ENCODE measurements at regions of chr2 and their contacts with region 1.

Region 1: GRCh38 chr2:217886720-217887309 is 116.0 kb downstream of the TNS1 start:
- DNase-seq: peak; percentile 76 to 81
- ATAC-seq: peak; percentile 80 to 89
- H3K4me3 ChIP-seq: no peak overlapping the region
- H3K27ac ChIP-seq: no peak overlapping the region
- H3K4me1 ChIP-seq: peaks cover 7% of the 10 kb centered on the region; the same call in 2 of the 3 replicates
- CTCF ChIP-seq: peak; percentile 77
- EP300 ChIP-seq: no peak
- POLR2A ChIP-seq: no peak
- RAD21 ChIP-seq: peak; percentile 71 to 81

Region 2: GRCh38 chr2:217835931-217836891 is 50.6 kb before region 1 on chr2:
- CTCF ChIA-PET with region 1: interaction called, 11 read pairs
- POLR2A ChIA-PET with region 1: no interaction called
- DNase-seq: peak in 1 of 2 experiments; percentile 25
- ATAC-seq: peak in 1 of 2 experiments; percentile 11; a peak in 2 of 6 replicates
- H3K4me3 ChIP-seq: no peak overlapping the region
- H3K27ac ChIP-seq: 0 out of 6 replicates have a peak overlapping the region, but pooled peaks of 1 of the 2 experiments have one; percentile 8
- H3K4me1 ChIP-seq: no peaks in the 10 kb centered on the region
- CTCF ChIP-seq: no peak
- EP300 ChIP-seq: no peak
- POLR2A ChIP-seq: no peak
- RAD21 ChIP-seq: no peak

Region 3: DNA sequence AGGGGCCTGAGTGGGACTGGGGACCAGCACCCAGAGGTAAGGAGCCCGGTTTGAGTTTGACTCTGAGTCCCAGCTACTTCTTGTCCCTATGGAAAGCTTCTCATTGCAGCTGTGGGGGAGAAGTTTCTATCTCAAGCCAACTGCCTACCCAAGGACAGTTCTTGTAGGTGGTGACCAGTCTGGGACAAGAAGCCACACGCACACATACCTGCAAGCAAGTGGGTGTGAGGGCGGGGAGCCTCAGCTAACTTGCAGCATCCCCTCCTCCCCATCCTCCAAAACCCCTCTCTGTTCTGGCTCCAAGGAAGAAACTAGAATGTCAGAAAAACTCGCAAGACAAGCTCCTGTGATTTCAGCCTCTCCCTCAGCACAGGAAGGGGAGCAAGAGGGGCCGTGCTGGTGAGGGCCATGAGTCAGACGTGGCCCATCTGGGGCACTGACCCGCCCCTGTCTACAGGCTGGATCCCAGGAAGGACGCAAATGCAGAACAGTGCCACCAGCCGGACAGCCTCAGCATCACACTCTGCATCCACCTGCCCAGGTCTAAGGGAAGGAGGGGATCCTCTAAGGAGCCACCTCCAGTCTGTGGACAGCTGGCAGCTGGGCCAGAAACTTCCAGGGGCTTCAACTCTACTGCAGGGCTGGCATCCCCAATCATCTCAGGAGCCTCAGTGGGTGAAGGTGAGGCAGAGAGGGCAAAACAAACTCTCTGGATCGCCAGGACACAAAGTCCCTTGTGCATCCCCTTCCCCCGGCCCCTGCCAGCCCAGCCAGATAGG is 12.6 kb after region 1 on chr2:
- CTCF ChIA-PET with region 1: interaction called, 99 read pairs
- POLR2A ChIA-PET with region 1: no interaction called
- DNase-seq: peak; percentile 77 to 86
- ATAC-seq: peak; percentile 63 to 81
- H3K4me3 ChIP-seq: no peak overlapping the region
- H3K27ac ChIP-seq: peak overlapping the region; percentile 86 to 89
- H3K4me1 ChIP-seq: peaks cover 56% of the 10 kb centered on the region
- CTCF ChIP-seq: peak; percentile 63
- EP300 ChIP-seq: no peak
- POLR2A ChIP-seq: no peak
- RAD21 ChIP-seq: peak; percentile 32 to 43; a peak in 4 of 5 replicates

Region 4: DNA sequence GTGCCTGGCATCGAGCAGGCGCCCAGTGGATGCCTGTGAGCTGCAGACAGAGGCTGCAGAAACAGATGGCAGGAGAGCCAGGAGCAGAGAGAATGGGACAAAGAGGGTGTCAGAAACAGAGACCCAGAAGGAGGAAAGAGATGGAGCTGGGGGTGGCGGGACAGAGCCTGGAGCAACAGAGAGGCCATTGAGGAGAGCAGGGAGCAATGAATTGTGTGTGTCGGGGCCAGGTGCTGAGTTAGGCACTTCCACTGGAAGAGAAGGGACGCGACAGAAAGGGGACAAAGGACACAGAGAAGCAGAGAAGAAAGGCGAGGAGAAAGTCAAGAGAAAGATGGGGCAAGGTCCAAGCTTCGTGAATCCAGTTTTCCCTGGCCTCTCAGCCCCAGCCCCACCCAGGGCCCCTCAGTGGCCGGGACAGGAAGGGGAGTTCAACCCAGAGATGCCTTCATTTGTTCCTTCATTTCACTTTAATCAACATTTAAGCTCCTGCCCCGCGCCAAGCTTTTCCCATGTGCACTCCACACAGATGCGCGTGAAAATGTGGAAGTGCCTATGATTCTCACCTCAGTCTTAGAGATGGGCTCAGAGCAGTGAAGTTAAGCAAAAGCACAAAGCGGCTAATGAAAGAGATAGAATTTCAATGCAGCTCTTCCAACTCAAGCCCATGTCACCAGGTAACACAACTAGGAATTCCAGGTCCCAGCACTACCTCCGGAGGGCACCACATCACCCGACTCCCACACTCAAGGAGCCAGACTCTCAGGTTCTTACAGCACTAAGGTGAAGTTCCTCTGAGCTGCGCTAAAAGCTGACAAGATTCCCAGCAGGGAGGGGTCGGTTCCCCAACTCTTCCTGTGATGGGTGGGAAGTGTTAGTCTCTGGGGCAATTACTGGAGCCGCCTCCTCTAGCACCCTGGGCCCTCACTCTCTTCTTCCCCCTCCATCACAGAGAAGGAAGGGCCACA is 60.9 kb after region 1 on chr2:
- CTCF ChIA-PET with region 1: interaction called, 10 read pairs
- POLR2A ChIA-PET with region 1: no interaction called
- DNase-seq: no peak
- ATAC-seq: no peak
- H3K4me3 ChIP-seq: no peak overlapping the region
- H3K27ac ChIP-seq: no peak overlapping the region
- H3K4me1 ChIP-seq: peaks cover 35% of the 10 kb centered on the region
- CTCF ChIP-seq: no peak; the same call in 2 of the 3 replicates
- EP300 ChIP-seq: no peak
- POLR2A ChIP-seq: no peak
- RAD21 ChIP-seq: no peak

Measured in A549 (cell line).